Dendritic cell treated with granulocyte-macrophage colony-stimulating factor and Interleukin-4, amounts not matched to agents 40 ng/mL and 50 ng/mL, for 4 days (primary cell): ENCODE measurements at regions of chr20 and their contacts with region 1.

Region 1: GRCh38 chr20:21303061-21303871 is at the start of gene XRN2:
- H3K4me3 Mint-ChIP-seq: peak within 1 kb of the TSS; percentile 97
- H3K27ac Mint-ChIP-seq: peak within 1 kb of the TSS; percentile 99
- H3K4me1 Mint-ChIP-seq: peaks cover 23% of the 10 kb centered on the region
- H3K27me3 Mint-ChIP-seq: peaks cover 2% of the 10 kb centered on the region

Region 2: DNA sequence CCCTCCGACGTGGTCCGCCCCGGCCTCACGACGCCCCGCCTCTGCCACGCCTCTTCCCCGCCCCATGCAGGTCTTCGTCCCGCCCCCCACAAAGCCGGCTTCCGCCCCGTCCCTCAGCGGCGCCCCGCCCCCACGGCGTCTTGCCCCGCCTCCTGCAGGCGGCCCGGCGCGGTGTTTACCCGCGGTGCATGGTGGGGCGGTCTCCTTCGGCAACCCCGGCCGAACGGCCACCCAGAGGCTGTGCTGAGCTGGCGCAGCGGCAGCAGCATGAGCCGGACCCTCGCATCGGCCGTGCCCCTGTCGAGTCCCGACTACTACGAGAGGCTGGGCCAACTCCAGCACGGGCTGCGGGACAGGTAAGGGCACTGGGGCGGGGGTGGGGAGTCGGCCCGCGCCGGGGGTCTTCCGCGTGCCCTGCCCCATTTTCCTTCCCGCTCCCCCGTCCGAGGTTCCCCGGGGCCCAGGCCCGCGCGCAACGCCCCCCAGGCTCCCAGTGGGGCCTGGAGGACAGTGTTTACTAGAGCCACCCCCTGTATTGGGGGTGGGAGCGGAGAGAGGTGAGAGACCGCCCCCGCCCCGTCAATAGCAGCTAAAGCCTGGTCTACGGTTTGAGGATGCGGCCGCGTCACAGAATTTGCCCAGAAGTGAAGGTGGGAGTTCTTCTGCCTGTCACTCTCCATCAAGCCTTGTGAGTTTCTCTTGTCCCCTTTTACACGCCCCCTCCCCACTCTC is 177.3 kb before region 1 on chr20 and contains the start of gene KIZ:
- intact Hi-C with region 1: loop called (anchors 10 kb)
- H3K4me3 Mint-ChIP-seq: peak within 1 kb of the TSS; percentile 93
- H3K27ac Mint-ChIP-seq: peak within 1 kb of the TSS; percentile 90
- H3K4me1 Mint-ChIP-seq: peaks cover 20% of the 10 kb centered on the region
- H3K27me3 Mint-ChIP-seq: peaks cover 8% of the 10 kb centered on the region

Region 3: GRCh38 chr20:21235484-21236445 is 67.5 kb before region 1 on chr20:
- intact Hi-C with region 1: loop called (anchors 2 kb)
- H3K4me3 Mint-ChIP-seq: no peak overlapping the region
- H3K27ac Mint-ChIP-seq: no peak overlapping the region
- H3K4me1 Mint-ChIP-seq: peaks cover 3% of the 10 kb centered on the region
- H3K27me3 Mint-ChIP-seq: no peaks in the 10 kb centered on the region

Region 4: GRCh38 chr20:21339499-21339898 is 36.2 kb after region 1 on chr20:
- intact Hi-C with region 1: loop called (anchors 5 kb)
- H3K4me3 Mint-ChIP-seq: no peak overlapping the region
- H3K27ac Mint-ChIP-seq: no peak overlapping the region
- H3K4me1 Mint-ChIP-seq: peaks cover 29% of the 10 kb centered on the region
- H3K27me3 Mint-ChIP-seq: no peaks in the 10 kb centered on the region

Region 5: GRCh38 chr20:21380711-21381110 is 77.4 kb after region 1 on chr20:
- intact Hi-C with region 1: no loop called
- H3K4me3 Mint-ChIP-seq: no peak overlapping the region
- H3K27ac Mint-ChIP-seq: no peak overlapping the region
- H3K4me1 Mint-ChIP-seq: no peaks in the 10 kb centered on the region
- H3K27me3 Mint-ChIP-seq: no peaks in the 10 kb centered on the region

Region 6: DNA sequence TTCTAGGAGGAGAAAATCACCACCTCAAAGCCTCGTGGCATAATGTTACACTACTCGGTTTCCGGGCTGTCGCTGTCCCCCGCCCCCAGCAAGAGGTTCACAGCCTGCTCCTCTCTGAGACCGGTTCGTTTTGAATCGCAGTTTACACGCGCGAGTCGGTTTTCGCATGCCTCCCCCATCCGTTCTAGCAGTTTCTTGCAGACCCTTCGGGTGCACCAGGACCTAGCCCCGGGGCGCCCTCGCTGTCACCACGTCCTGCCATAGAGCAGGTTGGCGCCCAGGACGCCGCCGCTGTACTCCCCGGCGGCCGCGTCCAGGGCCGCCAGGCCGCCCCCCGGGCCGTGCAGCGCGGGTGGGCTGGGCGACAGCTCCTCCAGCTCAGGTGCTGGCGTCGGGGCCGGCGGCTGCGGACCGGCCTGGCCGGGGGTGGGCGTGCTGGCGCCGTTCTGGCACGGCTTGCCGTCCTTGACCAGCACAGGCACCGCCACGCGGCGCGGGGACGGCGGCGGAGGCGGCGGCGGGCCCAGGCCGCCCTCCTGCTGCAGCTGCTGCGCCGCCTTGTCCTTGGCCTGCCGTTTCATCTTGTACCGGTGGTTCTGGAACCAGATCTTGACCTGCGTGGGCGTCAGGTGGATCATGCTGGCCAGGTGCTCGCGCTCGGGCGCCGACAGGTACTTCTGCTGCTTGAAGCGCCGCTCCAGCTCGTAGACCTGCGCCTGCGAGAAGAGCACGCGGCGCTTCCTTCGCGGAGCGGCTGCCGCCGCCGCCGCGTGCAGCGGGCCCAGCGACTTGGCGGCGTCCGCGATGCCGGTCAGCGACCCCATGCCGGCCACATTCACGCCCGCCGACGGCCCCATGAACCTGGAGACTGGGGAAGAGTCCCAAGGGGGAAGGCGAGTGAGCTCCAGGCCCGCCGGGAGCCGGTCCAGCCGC is 92.7 kb after region 1 on chr20:
- intact Hi-C with region 1: loop called (anchors 10 kb)
- H3K4me3 Mint-ChIP-seq: peak overlapping the region; percentile 52
- H3K27ac Mint-ChIP-seq: no peak overlapping the region
- H3K4me1 Mint-ChIP-seq: peaks cover 27% of the 10 kb centered on the region
- H3K27me3 Mint-ChIP-seq: peaks cover 75% of the 10 kb centered on the region